Heart right ventricle (tissue), 16 donors: ENCODE measurements at regions of chr1 and their contacts with region 1.

Region 1: DNA sequence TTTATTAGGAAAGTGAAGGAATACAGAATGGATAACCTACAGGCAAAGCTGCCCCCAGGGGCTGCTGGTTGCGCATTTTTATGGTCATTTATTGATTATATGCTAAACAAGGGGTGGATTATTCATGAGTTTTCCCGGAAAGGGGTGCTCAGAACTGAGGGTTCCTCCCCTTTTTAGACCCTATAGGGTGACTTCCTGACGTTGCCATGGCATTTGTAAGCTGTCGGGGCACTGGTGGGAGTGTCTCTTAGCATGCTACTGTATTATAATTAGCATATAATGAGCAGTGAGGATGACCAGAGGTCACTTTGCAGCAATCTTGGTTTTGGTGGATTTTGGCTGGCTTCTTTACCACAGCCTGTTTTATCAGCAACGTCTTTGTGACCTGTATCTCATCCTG is 5.9 kb upstream of the ASAP3 start:
- DNase-seq: no peak
- ATAC-seq: no peak
- H3K4me3 ChIP-seq: no peak overlapping the region
- H3K27ac ChIP-seq: no peak overlapping the region
- H3K4me1 ChIP-seq: peaks cover 0 to 4% (median 2%) of the 10 kb centered on the region in 9 donors
- H3K27me3 ChIP-seq: peaks cover 0 to 17% (median 0%) of the 10 kb centered on the region in 7 donors
- CTCF ChIP-seq: no peak

Region 2: DNA sequence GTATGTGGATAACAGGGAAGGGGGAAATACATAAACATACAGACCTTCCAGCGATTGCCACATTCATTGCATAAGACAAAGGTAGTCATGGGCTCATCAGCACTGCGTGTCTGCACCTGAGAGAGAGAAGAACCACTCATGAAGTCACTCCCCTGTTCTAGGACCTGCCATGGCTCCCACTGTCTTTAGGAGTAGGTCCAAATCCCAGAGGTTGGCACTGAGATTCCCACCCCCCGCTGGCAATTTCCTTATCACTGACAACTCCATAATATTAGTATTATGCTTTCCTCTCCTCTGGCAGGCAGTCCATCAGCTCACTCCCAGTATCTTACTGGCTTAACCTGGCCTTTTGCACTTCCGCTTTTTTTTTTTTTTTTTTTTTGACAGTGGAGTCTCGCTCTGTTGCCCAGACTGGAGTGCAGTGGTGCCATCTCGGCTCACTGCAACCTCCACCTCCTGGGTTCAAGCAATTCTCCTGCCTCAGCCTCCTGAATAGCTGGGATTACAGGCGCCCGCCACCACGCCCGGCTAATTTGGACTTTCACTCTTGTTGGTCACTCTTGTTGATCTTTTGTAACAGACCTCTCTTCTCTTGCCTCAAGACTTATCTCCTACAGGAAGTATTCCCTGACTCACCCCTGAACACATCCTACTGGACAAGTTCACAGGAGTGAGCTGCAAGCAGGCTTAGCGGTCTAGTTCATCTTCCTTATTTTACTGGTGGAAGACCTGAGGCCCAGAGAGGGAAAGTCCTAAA is 105.4 kb before region 1 on chr1:
- intact Hi-C with region 1: no loop called
- DNase-seq: no peak
- ATAC-seq: peak in 2 of 8 donors; percentile 15 to 43
- H3K4me3 ChIP-seq: no peak overlapping the region
- H3K27ac ChIP-seq: peak overlapping the region in 7 of 10 donors; percentile 22 to 60 (median 34)
- H3K4me1 ChIP-seq: peaks cover 6 to 27% (median 21%) of the 10 kb centered on the region in 9 donors
- H3K27me3 ChIP-seq: no peaks in the 10 kb centered on the region
- CTCF ChIP-seq: no peak

Region 3: DNA sequence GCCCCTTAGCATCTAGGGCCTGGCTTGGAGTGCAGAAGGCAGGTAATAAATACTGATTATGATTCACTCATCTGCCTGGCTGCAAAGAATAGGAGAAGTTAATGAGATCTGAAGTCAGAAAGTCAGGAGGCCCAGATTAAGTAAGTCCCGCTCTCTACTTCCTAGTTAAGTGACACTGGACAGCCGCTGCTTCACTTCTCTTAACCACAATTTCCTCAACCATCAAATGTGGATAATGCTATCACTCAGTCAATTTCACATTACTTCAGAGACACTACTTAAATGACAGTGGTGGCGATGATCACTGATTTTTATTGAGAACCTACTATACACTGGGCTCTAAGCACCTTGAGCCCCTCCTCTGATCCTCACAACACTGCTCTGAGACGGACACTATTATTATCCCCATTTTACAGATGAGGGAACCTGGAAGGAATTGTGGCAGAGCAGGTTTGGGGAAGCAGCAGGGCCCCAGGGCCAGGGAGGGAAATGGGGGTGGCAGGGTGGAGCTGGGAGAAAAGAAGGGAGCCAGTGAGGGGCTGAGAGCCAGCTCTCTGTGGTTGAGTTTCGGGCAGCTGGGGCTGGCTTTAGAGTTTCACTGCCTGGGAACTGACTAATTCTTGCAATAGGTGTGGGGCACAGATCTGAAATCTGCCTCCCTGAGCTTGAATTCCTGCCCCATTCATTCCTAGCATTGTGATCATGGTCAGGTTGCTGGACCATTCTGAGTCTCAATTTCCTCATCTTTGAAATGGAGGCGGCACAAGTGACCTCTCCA is 43.6 kb after region 1 on chr1:
- intact Hi-C with region 1: loop called in 2 of 10 experiments (anchors 2 to 5 kb)
- DNase-seq: no peak
- ATAC-seq: no peak
- H3K4me3 ChIP-seq: no peak overlapping the region
- H3K27ac ChIP-seq: peak overlapping the region in 1 of 10 donors; percentile 73
- H3K4me1 ChIP-seq: peaks cover 11 to 64% (median 19%) of the 10 kb centered on the region in 9 donors
- H3K27me3 ChIP-seq: peaks cover 0 to 16% (median 6%) of the 10 kb centered on the region in 7 donors
- CTCF ChIP-seq: no peak

Region 4: DNA sequence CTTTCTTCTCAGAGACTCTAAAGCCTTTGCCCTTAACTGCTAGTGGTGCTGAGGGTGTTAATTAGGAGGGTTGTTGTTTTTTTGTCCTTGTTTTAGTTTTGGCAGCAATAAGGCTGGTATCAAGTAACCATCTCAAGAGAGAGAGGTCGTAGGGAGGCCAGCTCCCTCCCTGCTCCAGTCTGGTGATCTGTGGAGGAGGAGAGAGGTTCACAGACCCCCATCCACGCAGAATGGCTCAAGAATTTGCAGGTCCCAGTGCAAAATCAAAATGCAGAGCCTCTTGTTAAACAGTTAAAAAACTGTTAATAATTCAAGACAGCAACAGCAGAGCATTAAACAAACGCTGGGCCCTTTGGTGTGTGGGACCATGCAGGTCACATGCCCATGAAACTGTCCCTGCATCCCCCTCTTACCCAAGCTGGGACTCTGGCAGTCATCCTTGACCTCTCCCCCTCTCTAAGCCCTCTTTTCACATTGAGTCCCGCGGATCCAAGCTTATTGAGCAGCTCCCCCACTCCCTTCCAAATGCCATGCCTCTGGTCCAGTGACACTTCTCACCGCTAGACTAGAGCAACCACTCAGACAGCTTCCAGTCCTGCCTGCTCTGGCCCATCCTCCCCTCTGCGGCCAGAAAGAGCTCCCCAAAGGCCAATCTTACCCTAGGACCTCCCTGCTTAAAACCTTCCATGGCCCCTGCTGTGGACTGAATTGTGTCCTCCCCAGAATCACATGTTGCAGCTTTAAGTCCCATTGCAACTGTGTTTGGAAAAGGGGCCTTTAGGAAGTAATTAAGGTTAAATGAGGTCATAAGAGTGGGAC is 154.1 kb after region 1 on chr1:
- intact Hi-C with region 1: loop called in 5 of 10 experiments (anchors 5 kb)
- DNase-seq: no peak
- ATAC-seq: peak in 3 of 8 donors; percentile 15 to 69 (median 19)
- H3K4me3 ChIP-seq: no peak overlapping the region
- H3K27ac ChIP-seq: no peak overlapping the region
- H3K4me1 ChIP-seq: peaks cover 0 to 16% (median 0%) of the 10 kb centered on the region in 9 donors
- H3K27me3 ChIP-seq: peaks cover 0 to 3% (median 0%) of the 10 kb centered on the region in 7 donors
- CTCF ChIP-seq: no peak